ENCODE measurements at regions of chr19 and their contacts with region 1.

Region 1: GRCh38 chr19:49570138-49570856 is 10.1 kb downstream of the NOSIP start:
- DNase-seq: peak; percentile 87
- ATAC-seq: peak; percentile 53
- H3K4me3 Mint-ChIP-seq: no peak overlapping the region
- H3K27ac Mint-ChIP-seq: peak overlapping the region; percentile 86
- H3K4me1 Mint-ChIP-seq: peaks cover 49% of the 10 kb centered on the region
- H3K27me3 Mint-ChIP-seq: no peaks in the 10 kb centered on the region

Region 2: GRCh38 chr19:49473868-49474544 is 96.3 kb before region 1 on chr19 and contains the start of gene FLT3LG:
- CTCF ChIA-PET with region 1: interaction called, 19 read pairs
- DNase-seq: peak; percentile 96
- ATAC-seq: peak; percentile 73
- H3K4me3 Mint-ChIP-seq: peak within 1 kb of the TSS; percentile 87
- H3K27ac Mint-ChIP-seq: peak within 1 kb of the TSS; percentile 85
- H3K4me1 Mint-ChIP-seq: peaks cover 54% of the 10 kb centered on the region
- H3K27me3 Mint-ChIP-seq: no peaks in the 10 kb centered on the region
- total RNA-seq, gene FLT3LG: 112 to 151 TPM

Region 3: GRCh38 chr19:49512970-49513745 is 57.1 kb before region 1 on chr19:
- CTCF ChIA-PET with region 1: interaction called, 12 read pairs
- DNase-seq: no peak
- ATAC-seq: peak; percentile 72
- H3K4me3 Mint-ChIP-seq: peak overlapping the region; percentile 72
- H3K27ac Mint-ChIP-seq: peak overlapping the region; percentile 66
- H3K4me1 Mint-ChIP-seq: peaks cover 18% of the 10 kb centered on the region
- H3K27me3 Mint-ChIP-seq: no peaks in the 10 kb centered on the region

Region 4: GRCh38 chr19:49533551-49534488 is 36.5 kb before region 1 on chr19:
- CTCF ChIA-PET with region 1: interaction called, 34 read pairs
- DNase-seq: peak; percentile 86
- ATAC-seq: peak; percentile 94
- H3K4me3 Mint-ChIP-seq: peak overlapping the region; percentile 74
- H3K27ac Mint-ChIP-seq: peak overlapping the region; percentile 62
- H3K4me1 Mint-ChIP-seq: peaks cover 23% of the 10 kb centered on the region
- H3K27me3 Mint-ChIP-seq: peaks cover 2% of the 10 kb centered on the region

Region 5: GRCh38 chr19:49580264-49581006 is 10.1 kb after region 1 on chr19 and contains the start of gene NOSIP:
- CTCF ChIA-PET with region 1: interaction called, 55 read pairs
- DNase-seq: peak; percentile 98
- ATAC-seq: peak; percentile 98
- H3K4me3 Mint-ChIP-seq: peak within 1 kb of the TSS; percentile 92
- H3K27ac Mint-ChIP-seq: peak within 1 kb of the TSS; percentile 94
- H3K4me1 Mint-ChIP-seq: peaks cover 28% of the 10 kb centered on the region
- H3K27me3 Mint-ChIP-seq: no peaks in the 10 kb centered on the region
- total RNA-seq, gene NOSIP: 77.3 to 96.1 TPM

Region 6: DNA sequence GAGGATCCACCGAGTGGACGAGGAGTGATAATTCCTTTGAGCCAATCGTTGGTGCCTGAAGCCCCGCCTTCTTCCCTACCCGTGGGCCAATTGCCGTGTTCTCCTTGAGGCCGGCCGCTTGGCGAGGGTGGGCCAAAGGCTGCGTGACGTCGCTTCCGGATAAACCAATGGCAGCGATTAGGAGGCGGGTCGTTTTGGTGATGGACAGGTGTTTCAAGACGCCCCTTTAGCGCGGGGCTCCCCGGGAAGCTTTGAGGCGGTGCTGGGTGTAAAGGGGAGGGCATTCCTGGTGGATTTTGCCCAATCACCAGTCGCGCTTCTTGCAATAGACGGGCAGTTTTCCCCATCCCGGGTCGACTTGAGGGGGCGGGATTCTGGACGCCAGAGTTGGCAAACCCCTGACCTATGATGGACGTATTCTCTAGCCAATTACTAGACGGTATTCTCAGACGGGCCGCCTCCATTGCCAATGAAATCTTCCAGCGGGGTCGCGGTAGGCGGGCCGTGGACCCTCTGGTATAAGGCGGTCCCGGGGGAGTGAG is 106.5 kb after region 1 on chr19:
- CTCF ChIA-PET with region 1: interaction called, 68 read pairs
- DNase-seq: peak; percentile 100
- ATAC-seq: peak; percentile 79
- H3K4me3 Mint-ChIP-seq: peak overlapping the region; percentile 74
- H3K27ac Mint-ChIP-seq: peak overlapping the region; percentile 99
- H3K4me1 Mint-ChIP-seq: peaks cover 38% of the 10 kb centered on the region
- H3K27me3 Mint-ChIP-seq: no peaks in the 10 kb centered on the region